ENCODE measurements at regions of chr14 and their contacts with region 1.

Region 1: DNA sequence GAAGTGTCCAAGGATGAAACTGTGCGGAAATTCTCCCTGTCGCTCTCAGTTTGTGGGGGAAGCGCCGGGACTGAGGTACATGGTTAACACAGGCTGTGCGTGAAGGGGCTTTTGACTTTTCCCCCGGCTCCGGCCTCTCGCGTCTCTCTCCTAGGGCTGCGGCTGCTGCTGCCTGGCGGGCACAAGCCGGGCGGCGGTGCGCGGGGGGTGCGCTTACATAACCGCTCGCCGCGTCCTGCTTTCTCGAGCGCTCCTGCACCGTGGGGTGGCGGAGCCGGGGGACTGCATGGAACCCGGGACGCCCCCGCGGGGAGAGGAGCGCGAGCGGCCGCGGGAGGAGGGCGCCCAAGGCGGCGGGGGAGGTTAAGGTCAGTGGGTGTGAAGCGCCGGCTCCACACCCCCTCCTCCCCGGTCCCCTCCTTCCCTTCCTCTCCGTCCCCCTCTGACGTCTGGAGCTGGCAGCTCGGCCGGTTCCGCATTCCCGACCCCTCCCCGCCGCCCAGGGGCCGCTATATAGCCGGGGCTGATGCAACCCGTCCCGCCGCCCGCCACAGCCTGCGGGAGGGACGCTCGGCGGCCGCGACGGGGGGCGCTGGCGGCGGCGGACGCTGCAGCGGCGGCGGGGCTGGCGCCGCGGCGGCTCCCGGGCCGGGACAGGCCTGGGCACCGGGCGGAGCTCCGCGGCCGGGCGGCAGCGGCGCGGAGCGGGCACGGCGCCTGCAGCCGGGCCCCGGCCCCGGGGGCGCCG is at the start of gene JDP2:
- DNase-seq: peak; percentile 98
- ATAC-seq: peak; percentile 91
- total RNA-seq, gene JDP2: 22.1 TPM

Region 2: GRCh38 chr14:75205591-75205990 is 222.1 kb before region 1 on chr14:
- intact Hi-C with region 1: no loop called
- DNase-seq: no peak
- ATAC-seq: no peak

Region 3: GRCh38 chr14:75310295-75311111 is 117.2 kb before region 1 on chr14:
- intact Hi-C with region 1: loop called (anchors 5 kb)
- DNase-seq: peak; percentile 94
- ATAC-seq: peak; percentile 79

Measured in Right ventricle myocardium superior (tissue), 1 donor.